ENCODE measurements at regions of chr20 and their contacts with region 1.

Region 1: GRCh38 chr20:35092524-35093266 is at the start of gene TRPC4AP:
- DNase-seq: peak; percentile 94 to 96
- ATAC-seq: peak; percentile 98
- H3K4me3 ChIP-seq: peak within 1 kb of the TSS; percentile 90 to 97
- H3K27ac ChIP-seq: peak within 1 kb of the TSS; percentile 43 to 97
- H3K4me1 ChIP-seq: no peaks in the 10 kb centered on the region
- H3K27me3 ChIP-seq: no peaks in the 10 kb centered on the region
- total RNA-seq, gene TRPC4AP: 53.4 to 58.3 TPM

Region 2: DNA sequence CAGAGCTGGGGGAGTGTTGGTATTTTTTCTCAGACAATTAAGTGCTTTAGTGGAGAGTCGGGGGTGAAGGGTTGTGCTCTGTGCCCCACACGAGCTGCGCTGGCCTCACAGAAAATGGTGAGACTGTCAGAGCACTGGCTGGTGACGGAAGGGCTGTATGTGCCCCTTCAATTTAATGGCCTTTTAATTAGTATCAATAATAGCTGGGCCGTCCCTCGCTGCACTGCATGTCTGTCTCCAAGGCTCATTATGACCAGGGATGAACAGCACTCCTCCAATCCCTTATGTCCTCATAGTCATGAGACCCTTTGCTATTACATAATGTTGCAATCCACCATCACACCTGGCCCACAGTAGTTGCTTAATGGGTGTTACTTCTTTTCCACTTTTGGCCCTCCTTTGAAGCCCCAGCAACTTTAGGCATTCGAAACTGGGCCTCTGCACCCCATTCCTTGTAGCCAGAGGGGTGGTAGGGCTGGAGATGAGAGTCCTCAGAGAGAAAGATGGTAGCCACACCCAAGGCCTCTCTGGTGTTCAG is 1108.4 kb before region 1 on chr20:
- intact Hi-C with region 1: no loop called
- DNase-seq: no peak
- ATAC-seq: no peak
- H3K4me3 ChIP-seq: no peak overlapping the region
- H3K27ac ChIP-seq: no peak overlapping the region
- H3K4me1 ChIP-seq: no peaks in the 10 kb centered on the region
- H3K27me3 ChIP-seq: no peaks in the 10 kb centered on the region

Region 3: GRCh38 chr20:34437330-34437986 is 655.2 kb before region 1 on chr20:
- intact Hi-C with region 1: no loop called
- DNase-seq: no peak
- ATAC-seq: no peak
- H3K4me3 ChIP-seq: no peak overlapping the region
- H3K27ac ChIP-seq: peak overlapping the region in 1 of 2 donors; percentile 51
- H3K4me1 ChIP-seq: peaks cover 0 to 2% of the 10 kb centered on the region in 2 donors
- H3K27me3 ChIP-seq: no peaks in the 10 kb centered on the region

Region 4: GRCh38 chr20:34876162-34877001 is 216.3 kb before region 1 on chr20 and contains the start of gene ACSS2:
- intact Hi-C with region 1: loop called in 1 of 2 experiments (anchors 5 kb)
- DNase-seq: peak; percentile 100
- ATAC-seq: peak; percentile 94
- H3K4me3 ChIP-seq: peak within 1 kb of the TSS; percentile 64 to 98
- H3K27ac ChIP-seq: peak within 1 kb of the TSS; percentile 52 to 83
- H3K4me1 ChIP-seq: peaks cover 0 to 4% of the 10 kb centered on the region in 2 donors
- H3K27me3 ChIP-seq: no peaks in the 10 kb centered on the region
- total RNA-seq, gene ACSS2: 64.8 to 87.4 TPM

Region 5: GRCh38 chr20:35013421-35014411 is 79.0 kb before region 1 on chr20:
- intact Hi-C with region 1: loop called in 1 of 2 experiments (anchors 5 kb)
- DNase-seq: peak; percentile 25 to 48
- ATAC-seq: no peak
- H3K4me3 ChIP-seq: no peak overlapping the region
- H3K27ac ChIP-seq: no peak overlapping the region
- H3K4me1 ChIP-seq: no peaks in the 10 kb centered on the region
- H3K27me3 ChIP-seq: no peaks in the 10 kb centered on the region

Region 6: DNA sequence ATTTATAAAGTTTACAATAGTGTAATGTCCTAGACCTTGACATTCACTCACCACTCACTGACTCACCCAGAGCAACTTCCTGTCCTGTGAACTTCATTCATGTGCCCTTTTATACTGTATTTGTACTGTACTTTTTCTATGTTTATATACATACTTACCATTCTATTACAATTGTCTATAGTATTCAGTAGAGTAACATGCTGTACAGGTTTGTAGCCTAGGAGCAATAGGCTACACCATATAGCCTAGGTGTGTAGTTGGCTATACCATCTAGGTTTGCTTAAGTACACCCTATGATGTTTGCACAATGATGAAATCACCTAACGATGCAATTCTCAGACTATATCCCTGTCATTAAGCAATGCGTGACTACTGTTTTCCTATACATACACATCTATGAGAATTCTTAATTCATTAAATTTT is 37.0 kb after region 1 on chr20:
- intact Hi-C with region 1: no loop called
- DNase-seq: no peak
- ATAC-seq: no peak
- H3K4me3 ChIP-seq: no peak overlapping the region
- H3K27ac ChIP-seq: no peak overlapping the region
- H3K4me1 ChIP-seq: peaks cover 0 to 2% of the 10 kb centered on the region in 2 donors
- H3K27me3 ChIP-seq: no peaks in the 10 kb centered on the region

Region 7: DNA sequence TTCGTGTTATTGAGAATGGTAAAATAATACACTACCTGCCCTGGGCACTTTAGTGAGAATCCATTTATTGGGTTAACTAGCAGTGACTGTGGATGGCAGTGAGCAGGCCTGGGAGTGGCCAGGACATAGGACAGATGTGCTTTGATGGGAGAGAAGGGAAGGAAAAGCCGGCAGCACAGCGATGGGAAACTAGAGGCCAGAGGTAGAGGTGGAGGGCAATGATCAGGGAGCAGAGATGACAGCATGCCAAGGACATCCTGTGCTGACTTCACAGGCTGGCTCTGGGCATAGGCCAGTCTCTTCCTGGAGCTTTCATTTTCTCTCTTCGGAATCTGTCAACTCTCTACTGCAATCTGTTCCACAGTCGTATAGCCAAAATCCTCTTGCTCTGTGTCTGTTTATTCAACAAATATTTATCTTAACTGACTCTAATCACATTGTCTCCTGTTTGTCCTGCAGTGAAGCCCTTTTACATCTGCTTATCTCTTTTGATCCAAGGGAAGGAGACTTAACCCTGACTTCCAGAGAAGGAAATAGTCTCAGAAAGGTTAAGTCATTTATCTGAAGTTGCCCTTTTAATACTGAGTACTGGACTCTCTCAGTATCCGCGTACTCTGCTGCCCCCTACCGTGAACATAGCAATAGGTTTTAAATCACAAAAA is 115.4 kb after region 1 on chr20:
- intact Hi-C with region 1: loop called (anchors 1 to 2 kb)
- DNase-seq: peak; percentile 84 to 86
- ATAC-seq: peak; percentile 96
- H3K4me3 ChIP-seq: peak overlapping the region in 1 of 2 donors; percentile 15
- H3K27ac ChIP-seq: peak overlapping the region in 1 of 2 donors; percentile 96
- H3K4me1 ChIP-seq: no peaks in the 10 kb centered on the region
- H3K27me3 ChIP-seq: no peaks in the 10 kb centered on the region

Region 8: DNA sequence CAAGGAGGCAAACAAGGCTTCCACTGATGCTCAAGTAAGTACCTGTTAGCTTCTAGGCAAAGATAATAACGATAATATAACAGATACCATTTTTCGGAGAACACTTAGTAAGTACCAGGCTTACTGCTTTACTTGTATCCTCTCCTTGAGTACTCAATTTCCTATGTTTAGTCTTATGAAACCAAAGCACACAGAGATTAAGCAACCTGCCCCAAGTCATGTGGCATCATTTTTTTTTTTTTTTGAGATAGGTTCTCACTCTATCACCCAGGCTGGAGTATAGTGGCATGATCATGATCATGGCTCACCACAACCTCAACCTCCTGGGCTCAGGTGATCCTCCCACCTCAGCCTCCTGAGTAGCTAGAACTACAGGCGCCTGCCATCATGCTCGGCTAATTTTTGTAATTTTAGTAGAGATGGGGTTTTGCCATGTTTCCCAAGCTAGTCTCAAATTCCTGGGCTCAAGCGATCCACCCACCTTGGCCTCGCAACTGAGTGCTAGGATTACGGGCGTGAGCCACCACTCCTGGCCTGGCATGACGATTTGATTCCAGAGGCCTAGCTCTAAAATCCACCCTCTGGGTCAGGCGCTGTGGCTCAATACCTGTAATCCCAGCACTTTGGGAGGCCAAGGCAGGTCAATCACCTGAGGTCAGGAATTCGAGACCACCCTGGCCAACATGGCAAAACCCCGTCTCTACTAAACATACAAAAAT is 536.9 kb after region 1 on chr20:
- intact Hi-C with region 1: no loop called
- DNase-seq: no peak
- ATAC-seq: no peak
- H3K4me3 ChIP-seq: no peak overlapping the region
- H3K27ac ChIP-seq: no peak overlapping the region
- H3K4me1 ChIP-seq: no peaks in the 10 kb centered on the region
- H3K27me3 ChIP-seq: no peaks in the 10 kb centered on the region